Heart left ventricle (tissue), 16 donors: ENCODE measurements at regions of chr3 and their contacts with region 1.

Region 1: DNA sequence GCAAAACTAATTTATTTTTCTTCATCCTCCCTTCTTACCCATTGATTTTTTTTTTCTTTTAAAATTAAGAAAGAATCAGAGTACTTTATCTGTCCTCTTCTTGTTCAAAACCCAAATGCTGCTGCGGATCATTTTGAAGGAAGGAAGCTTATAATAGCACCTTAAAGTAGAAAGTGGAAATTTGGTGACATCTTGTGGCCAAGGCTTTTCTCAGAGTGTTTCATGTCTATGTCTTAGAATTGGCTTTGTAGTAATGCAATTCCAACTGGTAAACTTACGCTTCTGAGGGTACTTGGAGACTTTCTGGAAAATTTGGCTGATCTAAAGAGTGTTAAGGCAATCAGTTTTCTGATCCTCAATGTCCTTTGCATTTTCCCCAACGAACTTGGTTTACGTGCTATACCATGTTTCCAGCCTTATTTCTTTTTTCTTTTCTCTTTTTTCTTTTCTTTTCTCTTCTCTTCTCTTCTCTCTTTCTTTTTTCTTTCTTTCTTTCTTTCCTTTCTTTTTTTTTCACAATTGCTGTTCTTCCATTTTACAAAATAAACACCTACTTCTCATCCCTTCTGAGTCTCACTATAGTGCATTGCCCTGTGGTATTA is 30.7 kb downstream of the C3orf38 start:
- DNase-seq: no peak
- ATAC-seq: no peak
- H3K4me3 ChIP-seq: no peak overlapping the region
- H3K27ac ChIP-seq: no peak overlapping the region
- H3K4me1 ChIP-seq: no peaks in the 10 kb centered on the region
- H3K27me3 ChIP-seq: no peaks in the 10 kb centered on the region
- CTCF ChIP-seq: peak in 10 of 12 donors; percentile 15 to 68 (median 28)
- POLR2A ChIP-seq: no peak

Region 2: GRCh38 chr3:87350364-87351199 is 829.9 kb before region 1 on chr3:
- intact Hi-C with region 1: loop called in 5 of 10 experiments (anchors 5 to 10 kb)
- DNase-seq: no peak
- ATAC-seq: peak in 3 of 4 donors; percentile 61 to 78 (median 70)
- H3K4me3 ChIP-seq: no peak overlapping the region
- H3K27ac ChIP-seq: no peak overlapping the region
- H3K4me1 ChIP-seq: no peaks in the 10 kb centered on the region
- H3K27me3 ChIP-seq: no peaks in the 10 kb centered on the region
- CTCF ChIP-seq: peak; percentile 73 to 95 (median 86)
- POLR2A ChIP-seq: no peak